ENCODE measurements at regions of chr11 and their contacts with region 1.

Region 1: GRCh38 chr11:64989416-64989815 is 7.4 kb downstream of the BATF2 start:
- DNase-seq: no peak
- ATAC-seq: no peak
- H3K4me3 ChIP-seq: no peak overlapping the region
- H3K27ac ChIP-seq: no peak overlapping the region
- H3K4me1 ChIP-seq: no peaks in the 10 kb centered on the region
- H3K27me3 ChIP-seq: no peaks in the 10 kb centered on the region

Region 2: DNA sequence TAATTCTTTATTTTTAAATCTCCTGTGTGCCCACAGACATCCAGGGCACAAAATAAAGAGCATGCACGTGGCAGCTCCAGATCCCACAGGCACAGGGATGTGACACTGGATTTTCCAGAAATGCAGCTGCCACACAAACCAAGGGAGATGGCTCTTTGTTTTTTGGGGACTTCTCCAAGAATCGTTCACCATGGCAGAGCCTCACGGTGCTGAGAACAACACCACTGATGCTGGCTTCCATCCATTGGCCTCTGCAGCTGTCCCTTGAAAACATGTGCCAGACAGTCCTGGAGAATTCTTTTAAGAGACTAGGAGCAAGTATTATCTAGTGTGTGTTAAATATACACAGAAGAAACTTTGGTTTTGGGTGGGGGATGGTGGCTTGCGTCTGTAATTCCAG is 506.8 kb before region 1 on chr11:
- intact Hi-C with region 1: loop called in 1 of 2 experiments (anchors 5 kb)
- DNase-seq: no peak
- ATAC-seq: no peak
- H3K4me3 ChIP-seq: no peak overlapping the region
- H3K27ac ChIP-seq: no peak overlapping the region
- H3K4me1 ChIP-seq: no peaks in the 10 kb centered on the region
- H3K27me3 ChIP-seq: no peaks in the 10 kb centered on the region

Region 3: GRCh38 chr11:64960719-64961118 is 28.7 kb before region 1 on chr11:
- intact Hi-C with region 1: no loop called
- DNase-seq: no peak
- ATAC-seq: no peak
- H3K4me3 ChIP-seq: no peak overlapping the region
- H3K27ac ChIP-seq: no peak overlapping the region
- H3K4me1 ChIP-seq: no peaks in the 10 kb centered on the region
- H3K27me3 ChIP-seq: peaks cover 0 to 2% of the 10 kb centered on the region in 2 donors